A549 (cell line): ENCODE measurements at regions of chr1 and their contacts with region 1.

Region 1: DNA sequence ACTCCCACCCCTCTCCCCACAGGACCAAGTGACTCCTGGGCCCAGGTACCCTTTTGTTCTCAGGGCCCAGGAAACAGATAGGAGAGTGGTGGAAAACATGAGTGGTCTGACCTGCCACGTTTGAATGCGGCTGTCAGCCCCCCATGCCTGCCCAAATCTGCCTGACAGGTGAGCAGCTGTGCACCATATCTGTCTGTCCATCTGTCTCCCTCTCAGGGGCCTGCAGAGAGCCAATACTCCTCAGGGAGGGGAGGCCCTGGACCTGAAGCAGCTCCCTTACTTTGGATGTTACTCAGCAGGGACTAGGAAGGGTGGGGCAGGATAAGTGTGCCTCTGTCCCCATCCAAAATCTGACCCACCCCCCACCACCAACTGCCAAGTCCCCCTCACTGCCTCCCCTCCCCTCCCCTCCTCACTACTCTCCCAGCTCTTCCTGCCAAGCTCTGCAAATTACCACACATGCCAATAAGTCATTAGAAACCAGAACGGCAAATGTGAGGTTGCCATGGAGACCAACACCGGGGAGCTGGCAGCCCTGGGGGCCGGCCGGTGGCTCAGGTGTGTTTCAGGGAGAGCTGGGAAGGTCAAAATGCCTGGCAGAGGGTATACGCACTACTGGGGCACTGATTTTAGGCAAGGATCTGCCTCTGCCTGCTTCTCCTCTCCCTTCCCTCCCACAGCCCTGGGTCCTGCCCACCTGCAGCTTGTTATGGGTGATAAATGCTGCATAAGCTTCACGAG is 11.5 kb downstream of the LRRN2 start:
- DNase-seq: no peak
- ATAC-seq: no peak
- H3K4me3 ChIP-seq: no peak overlapping the region
- H3K27ac ChIP-seq: no peak overlapping the region
- H3K4me1 ChIP-seq: peaks cover 11% of the 10 kb centered on the region
- CTCF ChIP-seq: no peak
- EP300 ChIP-seq: no peak
- POLR2A ChIP-seq: no peak
- RAD21 ChIP-seq: no peak

Region 2: DNA sequence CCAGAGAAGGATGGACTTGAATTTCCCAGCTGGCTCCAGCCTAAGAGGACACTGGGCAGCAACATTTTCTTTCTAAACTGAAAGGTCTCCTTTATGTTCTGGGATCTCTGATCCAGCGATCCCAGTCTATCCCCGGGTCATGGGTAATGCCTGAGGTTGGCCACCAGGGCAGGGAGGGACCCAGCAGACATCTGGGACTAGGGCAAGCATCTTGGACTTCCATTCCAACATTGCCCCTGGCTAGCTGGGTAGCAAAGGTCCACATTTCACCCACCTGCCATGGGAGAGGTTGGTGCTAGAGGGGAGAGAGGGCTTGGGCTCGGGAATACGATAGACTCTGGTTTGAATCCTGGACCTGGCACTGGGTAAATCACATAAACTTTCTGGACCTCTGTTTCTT is 73.1 kb before region 1 on chr1:
- CTCF ChIA-PET with region 1: no interaction called
- POLR2A ChIA-PET with region 1: no interaction called
- DNase-seq: peak; percentile 23 to 66
- ATAC-seq: peak; percentile 89 to 93
- H3K4me3 ChIP-seq: no peak overlapping the region
- H3K27ac ChIP-seq: no peak overlapping the region
- H3K4me1 ChIP-seq: no peaks in the 10 kb centered on the region
- CTCF ChIP-seq: no peak
- EP300 ChIP-seq: no peak
- POLR2A ChIP-seq: no peak
- RAD21 ChIP-seq: 0 out of 5 replicates have a peak, but pooled peaks of 1 of the 2 experiments have one; percentile 9

Region 3: GRCh38 chr1:204647114-204647804 is 26.8 kb before region 1 on chr1:
- CTCF ChIA-PET with region 1: no interaction called
- POLR2A ChIA-PET with region 1: no interaction called
- DNase-seq: peak; percentile 86 to 94
- ATAC-seq: peak; percentile 91 to 93
- H3K4me3 ChIP-seq: no peak overlapping the region
- H3K27ac ChIP-seq: peak overlapping the region; percentile 76 to 89
- H3K4me1 ChIP-seq: peaks cover 17% of the 10 kb centered on the region
- CTCF ChIP-seq: no peak
- EP300 ChIP-seq: no peak
- POLR2A ChIP-seq: no peak
- RAD21 ChIP-seq: no peak

Region 4: GRCh38 chr1:204663644-204664383 is 10.3 kb before region 1 on chr1:
- CTCF ChIA-PET with region 1: interaction called, 10 read pairs
- POLR2A ChIA-PET with region 1: no interaction called
- DNase-seq: no peak
- ATAC-seq: no peak
- H3K4me3 ChIP-seq: no peak overlapping the region
- H3K27ac ChIP-seq: no peak overlapping the region
- H3K4me1 ChIP-seq: no peaks in the 10 kb centered on the region
- CTCF ChIP-seq: no peak
- EP300 ChIP-seq: no peak
- POLR2A ChIP-seq: no peak
- RAD21 ChIP-seq: no peak

Region 5: GRCh38 chr1:204685236-204686006 is 11.3 kb after region 1 on chr1 and contains the start of gene LRRN2:
- CTCF ChIA-PET with region 1: interaction called, 10 read pairs
- POLR2A ChIA-PET with region 1: no interaction called
- DNase-seq: peak; percentile 28 to 60
- ATAC-seq: peak; percentile 69
- H3K4me3 ChIP-seq: peak within 1 kb of the TSS; percentile 65
- H3K27ac ChIP-seq: peak within 1 kb of the TSS; percentile 82 to 98
- H3K4me1 ChIP-seq: peaks cover 14% of the 10 kb centered on the region
- CTCF ChIP-seq: no peak
- EP300 ChIP-seq: no peak
- POLR2A ChIP-seq: no peak; the same call in none of the 2 replicates
- RAD21 ChIP-seq: no peak
- polyA plus RNA-seq, gene LRRN2: 3.6 and 4.3 TPM in 2 replicates